Astrocyte of the cerebellum (primary cell): ENCODE measurements at regions of chr17 and their contacts with region 1.

Region 1: DNA sequence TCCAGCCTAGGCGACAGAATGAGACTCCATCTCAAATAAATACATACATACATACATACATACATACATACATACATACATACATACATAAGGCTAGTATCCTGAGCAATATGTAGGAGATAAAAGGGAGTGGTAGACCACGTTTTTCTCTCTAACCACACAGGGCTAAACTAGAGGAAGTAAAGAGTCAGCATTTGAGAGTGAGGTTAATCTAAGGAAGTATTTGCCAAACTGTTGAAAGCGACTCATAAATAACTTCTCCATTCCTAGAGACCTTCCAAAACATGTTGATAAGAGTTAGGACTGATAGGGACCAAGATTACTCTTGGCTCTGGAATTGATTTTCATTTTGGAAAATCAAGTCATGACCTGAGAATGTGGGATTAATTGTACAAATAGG is 68.9 kb downstream of the NEUROD2 start:
- DNase-seq: no peak
- H3K4me3 ChIP-seq: no peak overlapping the region
- CTCF ChIP-seq: no peak

Region 2: GRCh38 chr17:39461113-39461925 is 77.5 kb before region 1 on chr17 and contains the start of gene CDK12:
- in situ Hi-C with region 1: loop called (anchors 5 kb)
- DNase-seq: peak; percentile 98
- H3K4me3 ChIP-seq: peak within 1 kb of the TSS; percentile 98
- CTCF ChIP-seq: no peak

Region 3: GRCh38 chr17:39573447-39574298 is 34.8 kb after region 1 on chr17:
- in situ Hi-C with region 1: loop called (anchors 5 kb)
- DNase-seq: no peak
- H3K4me3 ChIP-seq: peak overlapping the region; percentile 50
- CTCF ChIP-seq: no peak

Region 4: GRCh38 chr17:39612291-39612894 is 73.5 kb after region 1 on chr17:
- in situ Hi-C with region 1: loop called (anchors 5 kb)
- DNase-seq: no peak
- H3K4me3 ChIP-seq: no peak overlapping the region
- CTCF ChIP-seq: no peak